Activated CD4-positive, alpha-beta memory T cell treated with anti-CD3 and anti-CD28 coated beads for 36 hours (primary cell): ENCODE measurements at regions of chr14 and their contacts with region 1.

Region 1: GRCh38 chr14:97299661-97300060 is 502.5 kb downstream of the VRK1 start:
- DNase-seq: peak; percentile 50
- H3K4me3 Mint-ChIP-seq: no peak overlapping the region
- H3K27ac Mint-ChIP-seq: no peak overlapping the region
- H3K4me1 Mint-ChIP-seq: peaks cover 6% of the 10 kb centered on the region
- H3K27me3 Mint-ChIP-seq: peaks cover 4% of the 10 kb centered on the region

Region 2: GRCh38 chr14:97380539-97380941 is 80.9 kb after region 1 on chr14:
- CTCF ChIA-PET with region 1: interaction called, 3 read pairs
- POLR2A ChIA-PET with region 1: no interaction called
- intact Hi-C with region 1: loop called (anchors 1 kb)
- DNase-seq: peak; percentile 89
- H3K4me3 Mint-ChIP-seq: no peak overlapping the region
- H3K27ac Mint-ChIP-seq: peak overlapping the region; percentile 78
- H3K4me1 Mint-ChIP-seq: peaks cover 59% of the 10 kb centered on the region
- H3K27me3 Mint-ChIP-seq: no peaks in the 10 kb centered on the region